Gastrocnemius medialis (tissue), 4 donors: ENCODE measurements at regions of chr14 and their contacts with region 1.

Region 1: DNA sequence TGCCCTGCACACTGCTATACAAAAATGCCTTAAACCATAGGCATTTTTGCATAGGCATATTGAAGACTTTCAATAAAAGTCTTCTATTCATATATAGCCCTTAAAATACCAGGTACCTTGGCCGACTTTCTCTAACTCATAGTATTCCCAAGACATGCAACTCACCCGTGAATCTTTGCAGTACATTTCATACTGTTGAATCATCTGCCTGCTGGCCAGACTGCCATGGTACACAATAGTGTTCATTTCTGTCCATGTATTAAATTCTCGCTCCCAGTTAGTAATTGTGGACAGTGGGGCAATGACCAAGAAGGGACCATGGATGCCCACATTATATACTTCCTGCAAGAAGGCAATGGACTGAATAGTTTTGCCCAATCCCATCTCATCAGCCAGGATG is 24.3 kb upstream of the SUPT16H start:
- DNase-seq: no peak
- ATAC-seq: no peak
- H3K4me3 ChIP-seq: no peak overlapping the region
- H3K27ac ChIP-seq: no peak overlapping the region
- H3K4me1 ChIP-seq: no peaks in the 10 kb centered on the region
- H3K27me3 ChIP-seq: no peaks in the 10 kb centered on the region
- CTCF ChIP-seq: no peak
- POLR2A ChIP-seq: no peak

Region 2: GRCh38 chr14:20350860-20351259 is 1057.3 kb before region 1 on chr14:
- in situ Hi-C with region 1: loop called in 2 of 4 experiments (anchors 25 kb)
- intact Hi-C with region 1: no loop called
- DNase-seq: no peak
- ATAC-seq: no peak
- H3K4me3 ChIP-seq: no peak overlapping the region
- H3K27ac ChIP-seq: no peak overlapping the region
- H3K4me1 ChIP-seq: no peaks in the 10 kb centered on the region
- H3K27me3 ChIP-seq: no peaks in the 10 kb centered on the region
- CTCF ChIP-seq: no peak
- POLR2A ChIP-seq: no peak

Region 3: GRCh38 chr14:21300892-21301291 is 107.3 kb before region 1 on chr14:
- in situ Hi-C with region 1: no loop called
- intact Hi-C with region 1: no loop called
- DNase-seq: no peak
- ATAC-seq: no peak
- H3K4me3 ChIP-seq: peak overlapping the region; percentile 7 to 25 (median 20)
- H3K27ac ChIP-seq: no peak overlapping the region
- H3K4me1 ChIP-seq: no peaks in the 10 kb centered on the region
- H3K27me3 ChIP-seq: peaks cover 0 to 20% (median 5%) of the 10 kb centered on the region in 3 donors
- CTCF ChIP-seq: peak in 1 of 5 experiments; percentile 25
- POLR2A ChIP-seq: no peak

Region 4: DNA sequence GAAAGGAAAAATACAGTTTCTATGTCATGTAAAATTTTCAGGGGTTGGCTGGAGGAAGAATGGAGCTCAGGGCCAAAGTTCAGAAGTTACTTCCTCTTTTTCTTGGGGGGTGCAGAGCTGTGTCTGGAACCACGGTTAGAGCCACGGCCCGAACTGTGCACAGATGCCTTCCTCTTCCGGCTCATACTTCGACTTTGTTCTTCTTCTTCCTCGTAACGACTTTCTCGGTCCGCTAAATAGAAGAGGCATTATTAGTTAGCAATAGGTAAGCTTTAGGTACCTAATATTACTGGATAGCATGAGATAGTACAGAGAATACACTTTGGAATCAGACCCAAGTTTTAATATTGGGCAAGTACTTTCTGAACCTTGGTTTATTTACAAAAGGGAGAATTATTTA is 55.6 kb before region 1 on chr14:
- in situ Hi-C with region 1: loop called in 1 of 4 experiments (anchors 10 kb)
- intact Hi-C with region 1: loop called (anchors 5 kb)
- DNase-seq: peak in 1 of 2 donors; percentile 3
- ATAC-seq: no peak
- H3K4me3 ChIP-seq: no peak overlapping the region
- H3K27ac ChIP-seq: no peak overlapping the region
- H3K4me1 ChIP-seq: no peaks in the 10 kb centered on the region
- H3K27me3 ChIP-seq: no peaks in the 10 kb centered on the region
- CTCF ChIP-seq: no peak
- POLR2A ChIP-seq: no peak

Region 5: GRCh38 chr14:21367582-21368144 is 40.5 kb before region 1 on chr14:
- in situ Hi-C with region 1: loop called in 1 of 4 experiments (anchors 5 kb)
- intact Hi-C with region 1: no loop called
- DNase-seq: no peak
- ATAC-seq: no peak
- H3K4me3 ChIP-seq: no peak overlapping the region
- H3K27ac ChIP-seq: no peak overlapping the region
- H3K4me1 ChIP-seq: peaks cover 0 to under 1% of the 10 kb centered on the region in 2 donors
- H3K27me3 ChIP-seq: no peaks in the 10 kb centered on the region
- CTCF ChIP-seq: no peak
- POLR2A ChIP-seq: no peak

Region 6: GRCh38 chr14:21840765-21841164 is 432.6 kb after region 1 on chr14:
- in situ Hi-C with region 1: no loop called
- intact Hi-C with region 1: no loop called
- DNase-seq: no peak
- ATAC-seq: no peak
- H3K4me3 ChIP-seq: no peak overlapping the region
- H3K27ac ChIP-seq: no peak overlapping the region
- H3K4me1 ChIP-seq: no peaks in the 10 kb centered on the region
- H3K27me3 ChIP-seq: no peaks in the 10 kb centered on the region
- CTCF ChIP-seq: no peak
- POLR2A ChIP-seq: no peak